AG04450 (cell line): ENCODE measurements at regions of chr13 and their contacts with region 1.

Region 1: DNA sequence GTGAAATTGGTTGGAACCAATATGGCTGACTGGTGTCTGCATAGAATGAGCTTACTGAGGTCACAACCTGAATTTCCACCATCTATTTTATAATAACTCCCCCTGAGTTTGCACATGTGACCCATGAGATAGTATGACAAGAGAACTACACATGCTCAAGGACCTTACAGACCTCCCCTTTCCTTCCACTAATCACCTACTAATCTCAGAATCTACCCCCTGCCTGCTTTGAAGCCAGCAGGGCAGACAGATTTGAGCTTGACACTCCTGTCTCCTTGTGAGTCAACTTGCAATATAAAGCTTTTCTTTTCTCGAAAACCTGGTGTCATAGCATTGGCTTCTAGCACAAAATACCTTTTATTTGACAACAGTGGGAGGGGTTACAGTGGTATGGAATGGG is 248.4 kb downstream of the RFC3 start:
- DNase-seq: no peak
- H3K4me3 ChIP-seq: no peak overlapping the region
- H3K27ac ChIP-seq: no peak overlapping the region
- H3K27me3 ChIP-seq: no peaks in the 10 kb centered on the region
- CTCF ChIP-seq: no peak

Region 2: GRCh38 chr13:34044660-34045080 is 21.7 kb before region 1 on chr13:
- CTCF ChIA-PET with region 1: no interaction called
- POLR2A ChIA-PET with region 1: no interaction called
- DNase-seq: peak; percentile 18
- H3K4me3 ChIP-seq: no peak overlapping the region
- H3K27ac ChIP-seq: no peak overlapping the region
- H3K27me3 ChIP-seq: no peaks in the 10 kb centered on the region
- CTCF ChIP-seq: no peak

Region 3: DNA sequence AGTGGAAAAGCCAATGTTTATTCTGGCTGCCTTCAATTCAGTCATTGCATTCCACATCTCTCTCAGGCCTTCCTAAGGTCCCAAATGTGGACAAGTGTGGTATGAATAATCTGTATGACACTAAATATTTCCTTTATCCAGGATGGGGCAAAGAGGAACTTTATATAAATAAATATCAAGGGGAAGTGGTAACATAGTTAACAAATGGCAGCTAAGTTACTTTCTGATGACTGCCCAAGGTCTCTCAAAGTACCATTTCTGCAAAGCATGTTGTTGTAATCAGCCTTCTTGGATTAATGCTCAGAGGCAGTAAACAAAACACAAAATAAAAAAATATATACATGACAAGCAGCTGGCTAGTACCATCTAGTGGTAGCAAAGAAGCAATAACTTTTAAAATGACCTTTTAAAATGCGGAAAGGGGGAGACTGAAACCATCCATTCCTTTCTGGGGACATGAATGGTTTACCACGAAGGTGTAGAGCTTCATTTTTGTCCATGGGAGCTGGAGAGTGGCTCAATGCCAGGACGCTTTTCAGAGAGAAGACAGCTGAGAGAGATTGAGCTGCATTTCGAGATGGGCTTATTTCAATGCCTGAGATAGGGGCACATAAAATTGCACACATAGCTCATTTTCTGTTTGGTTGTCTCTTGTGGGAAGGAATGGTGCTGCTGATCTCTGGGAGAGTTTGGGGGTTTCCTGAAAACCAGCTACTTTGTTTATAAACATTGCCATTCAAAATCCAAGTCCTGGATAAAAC is 10.8 kb after region 1 on chr13:
- CTCF ChIA-PET with region 1: interaction called, 10 read pairs
- POLR2A ChIA-PET with region 1: no interaction called
- DNase-seq: no peak
- H3K4me3 ChIP-seq: no peak overlapping the region
- H3K27ac ChIP-seq: no peak overlapping the region
- H3K27me3 ChIP-seq: no peaks in the 10 kb centered on the region
- CTCF ChIP-seq: peak; percentile 62